H1 (cell line): ENCODE measurements at regions of chr18 and their contacts with region 1.

Region 1: DNA sequence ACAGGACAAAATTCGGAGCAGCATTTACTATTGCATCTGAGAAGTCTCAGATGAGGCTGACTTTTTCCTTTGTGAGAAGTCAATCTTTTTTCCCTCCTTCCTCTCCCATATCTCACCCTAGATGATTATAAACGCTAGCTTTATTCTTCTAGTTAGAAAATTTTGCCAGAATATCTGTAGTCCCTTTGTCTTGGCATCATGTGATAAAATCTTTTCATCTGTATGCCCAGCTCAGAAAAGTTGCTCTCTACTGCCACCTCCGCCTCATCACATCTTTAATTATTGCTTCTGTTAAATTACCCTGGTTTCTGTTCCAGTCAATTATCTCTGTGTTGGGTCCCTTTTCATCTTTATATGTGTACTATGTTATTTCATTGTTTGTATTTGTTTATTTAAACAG is 210.8 kb upstream of the SLC35G4 start:
- DNase-seq: no peak
- H3K4me3 ChIP-seq: no peak overlapping the region
- H3K27ac ChIP-seq: no peak overlapping the region
- H3K4me1 ChIP-seq: no peaks in the 10 kb centered on the region
- H3K27me3 ChIP-seq: peaks cover 0 to 1% (median 0%) of the 10 kb centered on the region in 4 experiments; a peak in 1 of 7 replicates
- CTCF ChIP-seq: peak in 2 of 3 experiments; percentile 12 to 42; a peak in 2 of 4 replicates
- EP300 ChIP-seq: no peak
- POLR2A ChIP-seq: no peak
- RAD21 ChIP-seq: peak in 1 of 2 experiments; percentile 27; a peak in 2 of 4 replicates

Region 2: DNA sequence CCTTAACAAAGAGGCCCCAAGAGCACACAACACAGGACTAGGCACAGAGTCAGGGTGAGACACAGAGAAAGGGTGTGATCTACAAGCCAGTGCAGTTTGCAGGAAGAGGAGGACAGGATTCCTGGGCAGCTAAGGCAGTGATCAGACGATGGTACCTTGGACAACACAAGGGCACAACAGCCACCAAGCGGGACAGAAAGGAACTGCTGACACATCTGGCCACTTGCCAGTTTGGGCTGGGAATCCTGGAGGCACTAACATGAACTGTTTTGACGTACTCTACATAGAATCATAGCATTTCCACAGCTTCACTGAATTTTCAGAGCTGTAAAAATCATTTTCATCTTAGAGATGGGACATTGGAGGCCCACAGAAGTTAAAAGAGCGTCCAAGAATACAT is 10.7 kb before region 1 on chr18:
- CTCF ChIA-PET with region 1: interaction called, 18 read pairs
- POLR2A ChIA-PET with region 1: no interaction called
- DNase-seq: no peak
- H3K4me3 ChIP-seq: no peak overlapping the region
- H3K27ac ChIP-seq: no peak overlapping the region
- H3K4me1 ChIP-seq: no peaks in the 10 kb centered on the region
- H3K27me3 ChIP-seq: no peaks in the 10 kb centered on the region
- CTCF ChIP-seq: peak; percentile 27 to 55 (median 50)
- EP300 ChIP-seq: no peak
- POLR2A ChIP-seq: no peak
- RAD21 ChIP-seq: peak; percentile 33 to 50; a peak in 3 of 4 replicates

Region 3: GRCh38 chr18:11411048-11411447 is 12.4 kb after region 1 on chr18:
- CTCF ChIA-PET with region 1: interaction called, 10 read pairs
- POLR2A ChIA-PET with region 1: no interaction called
- DNase-seq: no peak
- H3K4me3 ChIP-seq: no peak overlapping the region
- H3K27ac ChIP-seq: no peak overlapping the region
- H3K4me1 ChIP-seq: no peaks in the 10 kb centered on the region; a peak in 1 of 7 replicates
- H3K27me3 ChIP-seq: no peaks in the 10 kb centered on the region
- CTCF ChIP-seq: no peak
- EP300 ChIP-seq: no peak
- POLR2A ChIP-seq: no peak
- RAD21 ChIP-seq: no peak